CD4-positive, alpha-beta memory T cell (primary cell): ENCODE measurements at regions of chr4 and their contacts with region 1.

Region 1: GRCh38 chr4:152255437-152256011 is 280.4 kb downstream of the FBXW7 start:
- DNase-seq: peak; percentile 54 to 74 (median 60)
- H3K4me3 ChIP-seq: no peak overlapping the region
- H3K4me3 Mint-ChIP-seq: no peak overlapping the region
- H3K27ac ChIP-seq: no peak overlapping the region
- H3K27ac Mint-ChIP-seq: no peak overlapping the region
- H3K4me1 ChIP-seq: peaks cover 50% of the 10 kb centered on the region
- H3K4me1 Mint-ChIP-seq: peaks cover 0 to 19% (median 13%) of the 10 kb centered on the region in 4 donors
- H3K27me3 ChIP-seq: no peaks in the 10 kb centered on the region
- H3K27me3 Mint-ChIP-seq: no peaks in the 10 kb centered on the region

Region 2: DNA sequence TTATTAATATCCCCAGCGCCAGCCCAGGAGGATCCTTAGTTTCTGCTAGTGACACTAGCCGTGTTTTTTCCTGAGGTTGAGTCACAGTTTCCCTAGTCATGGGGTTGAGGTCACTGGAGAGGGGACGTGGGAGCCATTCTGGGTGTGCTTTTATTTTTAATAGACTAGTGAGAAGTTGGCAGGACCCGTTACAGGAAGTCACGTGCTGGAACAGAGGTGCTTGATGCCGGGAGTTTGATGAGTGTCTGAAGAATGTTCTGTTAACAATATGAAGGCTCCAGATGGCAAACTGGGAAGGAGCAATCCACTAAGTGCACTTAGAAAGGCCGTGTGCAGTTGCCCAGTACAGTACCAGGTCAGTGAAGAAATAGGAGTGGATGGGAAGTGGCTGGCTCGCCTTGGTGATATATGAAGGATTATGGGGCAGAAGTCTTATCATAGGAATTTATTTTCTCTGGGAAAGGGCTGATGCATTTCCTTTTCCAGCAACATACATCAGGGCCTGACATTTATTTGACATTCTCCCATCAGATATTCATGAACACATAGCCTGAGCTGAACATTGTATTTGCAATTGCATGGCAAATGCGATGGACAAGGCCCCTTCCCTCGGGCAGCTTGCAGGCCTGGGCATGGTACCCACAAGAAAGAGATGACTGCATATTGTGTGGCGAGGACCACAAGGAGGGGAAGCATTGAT is 11.5 kb before region 1 on chr4:
- CTCF ChIA-PET with region 1: interaction called, 3 read pairs
- POLR2A ChIA-PET with region 1: interaction called, 34 read pairs
- intact Hi-C with region 1: no loop called
- DNase-seq: peak in 1 of 5 donors; percentile 6
- H3K4me3 ChIP-seq: no peak overlapping the region
- H3K4me3 Mint-ChIP-seq: peak overlapping the region in 6 of 8 donors; percentile 1 to 77 (median 24)
- H3K27ac ChIP-seq: no peak overlapping the region
- H3K27ac Mint-ChIP-seq: peak overlapping the region in 4 of 7 donors; percentile 4 to 50 (median 16)
- H3K4me1 ChIP-seq: peaks cover 40% of the 10 kb centered on the region
- H3K4me1 Mint-ChIP-seq: peaks cover 26 to 49% (median 37%) of the 10 kb centered on the region in 4 donors
- H3K27me3 ChIP-seq: no peaks in the 10 kb centered on the region
- H3K27me3 Mint-ChIP-seq: no peaks in the 10 kb centered on the region

Region 3: DNA sequence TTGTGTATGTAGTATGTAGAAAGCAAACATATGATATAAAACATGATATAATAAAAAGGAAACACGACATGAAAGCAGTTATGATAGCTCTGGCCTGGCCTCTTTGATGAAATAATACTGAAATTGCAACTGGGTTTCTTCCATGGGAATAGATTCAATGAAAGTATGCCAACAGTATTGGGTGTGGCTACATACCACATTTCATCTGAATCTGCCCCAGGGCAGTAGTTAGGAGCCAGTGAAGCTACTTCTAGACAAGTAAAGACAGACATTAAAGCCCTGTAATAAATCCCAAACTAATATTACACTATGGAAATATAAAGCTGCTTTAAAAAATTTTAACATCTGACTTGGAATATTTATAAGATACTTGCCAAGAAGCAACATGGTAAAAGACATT is 73.1 kb after region 1 on chr4:
- CTCF ChIA-PET with region 1: interaction called, 6 read pairs
- POLR2A ChIA-PET with region 1: interaction called, 8 read pairs
- intact Hi-C with region 1: loop called (anchors 5 kb)
- DNase-seq: no peak
- H3K4me3 ChIP-seq: no peak overlapping the region
- H3K4me3 Mint-ChIP-seq: peak overlapping the region in 1 of 8 donors; percentile 56
- H3K27ac ChIP-seq: no peak overlapping the region
- H3K27ac Mint-ChIP-seq: peak overlapping the region in 3 of 7 donors; percentile 53 to 70 (median 65)
- H3K4me1 ChIP-seq: peaks cover 22% of the 10 kb centered on the region
- H3K4me1 Mint-ChIP-seq: peaks cover 14 to 24% (median 17%) of the 10 kb centered on the region in 4 donors
- H3K27me3 ChIP-seq: no peaks in the 10 kb centered on the region
- H3K27me3 Mint-ChIP-seq: no peaks in the 10 kb centered on the region